Psoas muscle (tissue), 8 donors: ENCODE measurements at regions of chr3 and their contacts with region 1.

Region 1: GRCh38 chr3:171566803-171567422 is 106.7 kb upstream of the TNIK start:
- DNase-seq: no peak
- ATAC-seq: peak; percentile 48 to 85 (median 68)
- H3K4me3 ChIP-seq: no peak overlapping the region
- H3K27ac ChIP-seq: no peak overlapping the region
- H3K4me1 ChIP-seq: peaks cover 4% of the 10 kb centered on the region
- H3K27me3 ChIP-seq: no peaks in the 10 kb centered on the region
- CTCF ChIP-seq: peak; percentile 85

Region 2: GRCh38 chr3:170961616-170962400 is 605.1 kb before region 1 on chr3:
- intact Hi-C with region 1: loop called (anchors 2 to 10 kb)
- DNase-seq: no peak
- ATAC-seq: no peak
- H3K4me3 ChIP-seq: no peak overlapping the region
- H3K27ac ChIP-seq: no peak overlapping the region
- H3K4me1 ChIP-seq: no peaks in the 10 kb centered on the region
- H3K27me3 ChIP-seq: no peaks in the 10 kb centered on the region
- CTCF ChIP-seq: peak; percentile 62

Region 3: GRCh38 chr3:171049861-171050444 is 517.0 kb before region 1 on chr3:
- intact Hi-C with region 1: loop called (anchors 5 to 10 kb)
- DNase-seq: peak in 1 of 2 donors; percentile 30
- ATAC-seq: peak; percentile 64 to 80 (median 79)
- H3K4me3 ChIP-seq: no peak overlapping the region
- H3K27ac ChIP-seq: no peak overlapping the region
- H3K4me1 ChIP-seq: no peaks in the 10 kb centered on the region
- H3K27me3 ChIP-seq: no peaks in the 10 kb centered on the region
- CTCF ChIP-seq: peak; percentile 46